Posterior vena cava (tissue), 2 donors: ENCODE measurements at regions of chr2 and their contacts with region 1.

Region 1: GRCh38 chr2:17506736-17507616 is 11.3 kb downstream of the RAD51AP2 start:
- DNase-seq: no peak

Region 2: GRCh38 chr2:17555150-17555549 is 48.2 kb after region 1 on chr2:
- intact Hi-C with region 1: loop called in 1 of 2 experiments (anchors 2 kb)
- DNase-seq: no peak